Activated T-helper 1 cell treated with anti-CD3 and anti-CD28 coated beads, Interleukin-12 subunit alpha, Interleukin-12 subunit beta, Interleukin-2, Interleukin-4 antibody, amounts not matched to agents 30 ng/mL and 10 ng/mL and 1 ng/mL, durations not matched to agents 14 hours and 24 hours and 36 hours (primary cell): ENCODE measurements at regions of chr10 and their contacts with region 1.

Region 1: GRCh38 chr10:14459665-14460064 is 128.9 kb upstream of the FRMD4A start:
- DNase-seq: no peak
- H3K4me3 Mint-ChIP-seq: no peak overlapping the region
- H3K27ac Mint-ChIP-seq: no peak overlapping the region
- H3K4me1 Mint-ChIP-seq: no peaks in the 10 kb centered on the region
- H3K27me3 Mint-ChIP-seq: peaks cover 18% of the 10 kb centered on the region

Region 2: GRCh38 chr10:13823096-13823708 is 636.5 kb before region 1 on chr10:
- intact Hi-C with region 1: no loop called
- DNase-seq: no peak
- H3K4me3 Mint-ChIP-seq: no peak overlapping the region
- H3K27ac Mint-ChIP-seq: no peak overlapping the region
- H3K4me1 Mint-ChIP-seq: peaks cover 9% of the 10 kb centered on the region
- H3K27me3 Mint-ChIP-seq: peaks cover 7% of the 10 kb centered on the region

Region 3: GRCh38 chr10:14448197-14449000 is 11.3 kb before region 1 on chr10:
- intact Hi-C with region 1: loop called (anchors 1 kb)
- DNase-seq: no peak
- H3K4me3 Mint-ChIP-seq: no peak overlapping the region
- H3K27ac Mint-ChIP-seq: no peak overlapping the region
- H3K4me1 Mint-ChIP-seq: no peaks in the 10 kb centered on the region
- H3K27me3 Mint-ChIP-seq: peaks cover 12% of the 10 kb centered on the region

Region 4: DNA sequence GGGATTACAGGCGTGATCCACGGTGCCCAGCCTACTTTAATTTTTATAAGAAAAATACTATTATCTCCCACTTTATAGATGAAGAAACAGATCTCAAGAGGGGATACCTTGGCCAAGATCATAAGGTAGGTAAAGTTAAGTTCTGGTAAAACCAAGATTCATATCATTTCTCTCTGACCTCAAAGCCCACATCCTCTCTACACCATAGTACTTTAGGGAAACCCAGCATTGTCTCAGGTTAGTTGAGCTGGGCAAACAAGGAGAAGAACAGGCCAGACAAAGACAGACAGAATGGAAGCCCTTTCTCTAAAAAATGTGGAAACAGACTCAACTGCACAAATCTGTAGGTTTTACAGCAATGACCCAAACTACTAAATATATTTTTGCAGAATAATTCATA is 68.8 kb after region 1 on chr10:
- intact Hi-C with region 1: no loop called
- DNase-seq: no peak
- H3K4me3 Mint-ChIP-seq: peak overlapping the region; percentile 62
- H3K27ac Mint-ChIP-seq: peak overlapping the region; percentile 82
- H3K4me1 Mint-ChIP-seq: peaks cover 92% of the 10 kb centered on the region
- H3K27me3 Mint-ChIP-seq: no peaks in the 10 kb centered on the region